ENCODE measurements at regions of chr18 and their contacts with region 1.

Region 1: DNA sequence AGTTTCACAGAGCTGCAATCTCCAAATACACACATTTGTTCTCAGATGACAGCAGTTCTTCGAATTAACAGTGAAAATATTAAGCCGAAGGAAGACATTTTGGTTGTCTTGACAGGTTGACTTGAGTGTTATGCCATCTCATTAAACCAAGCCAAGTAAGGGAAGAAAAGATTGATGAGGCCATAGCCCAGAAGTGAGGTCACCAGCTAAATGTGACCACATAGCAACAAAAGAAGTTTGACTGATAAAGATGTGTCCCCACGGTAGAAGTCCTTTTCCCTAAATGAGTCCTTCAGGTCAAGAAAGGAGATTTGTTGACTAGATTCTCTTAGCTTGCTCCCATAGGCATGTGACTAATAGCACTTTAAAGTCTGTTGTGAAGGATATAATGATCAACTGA is 156.1 kb downstream of the CDH20 start:
- DNase-seq: no peak
- H3K4me3 ChIP-seq: no peak overlapping the region
- H3K27ac ChIP-seq: no peak overlapping the region
- H3K4me1 ChIP-seq: no peaks in the 10 kb centered on the region
- H3K27me3 ChIP-seq: no peaks in the 10 kb centered on the region
- CTCF ChIP-seq: no peak
- EP300 ChIP-seq: no peak
- POLR2A ChIP-seq: no peak

Region 2: DNA sequence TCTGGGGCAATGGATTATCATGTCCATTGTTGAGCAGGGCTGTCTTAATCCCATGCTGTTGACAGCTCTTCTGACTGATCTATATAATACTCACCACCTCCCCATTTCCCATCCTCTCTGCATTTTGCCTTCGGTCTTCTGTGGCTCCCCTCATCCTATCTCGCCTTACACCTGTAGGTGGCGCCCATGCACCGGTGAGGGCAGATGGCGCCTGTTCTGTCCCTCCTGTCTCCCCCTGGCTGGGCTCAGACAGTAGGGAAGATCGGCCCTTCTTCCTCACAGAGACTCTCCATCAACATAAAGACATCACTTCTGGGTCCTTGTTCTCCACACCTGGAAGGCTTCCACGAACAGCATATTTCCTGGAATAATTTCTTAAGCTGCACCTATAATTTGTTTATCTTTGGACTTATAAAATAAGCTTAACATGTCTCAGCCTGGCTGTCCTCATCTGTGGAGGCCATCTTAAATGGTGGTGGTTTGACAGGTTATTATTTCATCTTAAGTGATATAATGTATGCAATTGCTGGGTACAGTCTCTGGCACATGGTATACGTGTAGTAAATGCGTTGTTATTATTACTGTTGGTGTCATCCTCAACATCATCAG is 167.0 kb before region 1 on chr18:
- intact Hi-C with region 1: loop called (anchors 10 kb)
- DNase-seq: no peak
- H3K4me3 ChIP-seq: no peak overlapping the region
- H3K27ac ChIP-seq: no peak overlapping the region
- H3K4me1 ChIP-seq: no peaks in the 10 kb centered on the region
- H3K27me3 ChIP-seq: no peaks in the 10 kb centered on the region
- CTCF ChIP-seq: peak; percentile 21 to 40 (median 29)
- EP300 ChIP-seq: no peak
- POLR2A ChIP-seq: no peak

Region 3: GRCh38 chr18:61348230-61348629 is 141.1 kb before region 1 on chr18:
- intact Hi-C with region 1: no loop called
- DNase-seq: no peak
- H3K4me3 ChIP-seq: no peak overlapping the region
- H3K27ac ChIP-seq: no peak overlapping the region
- H3K4me1 ChIP-seq: no peaks in the 10 kb centered on the region
- H3K27me3 ChIP-seq: no peaks in the 10 kb centered on the region
- CTCF ChIP-seq: no peak
- EP300 ChIP-seq: no peak
- POLR2A ChIP-seq: no peak

Region 4: GRCh38 chr18:61754039-61754583 is 264.8 kb after region 1 on chr18:
- intact Hi-C with region 1: no loop called
- DNase-seq: no peak
- H3K4me3 ChIP-seq: no peak overlapping the region
- H3K27ac ChIP-seq: no peak overlapping the region
- H3K4me1 ChIP-seq: peaks cover 0 to 4% (median 0%) of the 10 kb centered on the region in 4 donors
- H3K27me3 ChIP-seq: no peaks in the 10 kb centered on the region
- CTCF ChIP-seq: no peak
- EP300 ChIP-seq: no peak
- POLR2A ChIP-seq: no peak